ENCODE measurements at regions of chr17 and their contacts with region 1.

Region 1: DNA sequence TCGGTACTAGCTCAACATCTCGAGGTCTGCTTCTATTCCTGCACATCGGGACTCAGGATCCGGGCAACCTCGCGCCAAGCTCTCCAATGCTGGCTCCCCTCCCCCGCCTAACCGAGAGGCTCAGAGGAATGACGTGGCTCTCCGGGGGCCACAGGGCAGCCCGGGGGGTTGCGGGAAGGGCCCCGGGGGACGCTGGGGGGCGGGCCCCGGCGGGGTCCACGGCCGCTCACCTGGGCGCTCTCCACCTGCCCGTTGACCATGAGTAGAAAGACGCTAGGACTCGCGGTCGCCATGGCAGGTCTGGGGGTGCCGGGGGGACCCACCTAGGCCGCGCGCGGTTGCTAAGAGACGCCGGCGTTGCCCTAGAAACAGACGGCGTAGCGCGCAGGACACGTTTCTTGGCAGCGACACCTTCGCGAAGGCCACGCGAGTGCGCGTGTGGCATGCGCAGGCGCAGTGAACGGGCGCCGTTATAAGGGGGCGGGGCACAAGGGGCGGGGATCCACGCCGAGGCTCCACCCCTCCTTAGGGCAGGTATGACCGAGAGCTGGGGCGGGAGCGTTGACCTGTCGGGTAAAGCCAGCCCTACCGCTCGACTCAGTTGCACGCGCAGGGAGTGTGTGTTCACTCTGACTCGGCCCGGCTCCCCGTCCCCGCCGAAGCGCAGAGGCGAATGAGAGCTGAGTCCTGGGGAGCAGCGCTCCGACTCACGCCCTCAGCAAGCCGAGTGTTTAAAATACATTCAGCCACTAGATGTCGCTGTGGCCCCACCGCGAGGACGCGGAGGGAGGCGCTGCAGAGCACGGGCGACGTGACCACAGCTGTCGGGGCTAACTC is at the start of gene B9D1:
- DNase-seq: peak; percentile 69 to 96
- H3K4me3 ChIP-seq: peak within 1 kb of the TSS; percentile 46 to 91
- H3K27ac ChIP-seq: peak within 1 kb of the TSS; percentile 55 to 86
- H3K4me1 ChIP-seq: no peaks in the 10 kb centered on the region
- H3K27me3 ChIP-seq: no peaks in the 10 kb centered on the region
- CTCF ChIP-seq: peak; percentile 95 to 100 (median 99)
- total RNA-seq, gene B9D1: 49.1 TPM

Region 2: DNA sequence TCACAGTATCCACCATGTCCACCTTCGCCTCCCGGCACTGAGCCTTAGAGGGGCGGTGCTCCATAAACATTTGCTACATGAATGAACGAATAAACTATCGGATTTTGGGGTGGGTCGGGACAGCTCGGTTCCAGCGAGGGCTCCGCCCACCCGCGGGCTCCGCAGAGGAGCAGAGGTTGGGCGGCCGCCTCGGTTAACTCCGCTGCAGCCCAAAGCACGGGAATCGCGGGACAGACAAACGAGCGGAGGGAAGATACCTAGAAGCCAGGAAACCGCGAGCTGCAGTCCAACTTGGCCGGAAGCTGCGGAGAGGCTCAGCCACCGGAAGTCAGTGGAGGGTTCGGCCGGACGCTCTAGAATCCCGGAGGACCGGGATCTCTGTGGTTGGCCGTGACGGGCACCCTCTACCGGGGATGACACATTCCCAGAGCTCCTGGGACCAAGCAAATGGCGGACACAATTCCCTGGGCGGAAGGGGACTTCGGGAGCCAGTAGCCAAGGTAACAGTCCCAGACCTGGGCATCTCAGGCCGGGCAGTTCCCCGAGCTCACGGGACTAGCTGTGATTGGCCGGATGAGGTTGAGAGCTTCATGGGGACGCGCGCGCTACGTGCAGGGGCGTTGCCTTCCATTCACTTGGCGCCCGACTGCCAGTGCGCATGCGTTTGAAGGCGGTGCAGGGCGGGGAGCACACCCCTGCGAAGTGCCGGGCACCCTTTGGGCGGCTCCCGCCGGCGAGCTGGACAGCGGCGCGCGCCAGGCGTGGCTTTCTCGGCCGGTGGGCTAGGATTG is 15.3 kb after region 1 on chr17:
- intact Hi-C with region 1: loop called (anchors 1 kb)
- DNase-seq: peak; percentile 95 to 99
- H3K4me3 ChIP-seq: peak overlapping the region; percentile 81 to 98
- H3K27ac ChIP-seq: peak overlapping the region; percentile 93 to 98
- H3K4me1 ChIP-seq: peaks cover 3 to 15% of the 10 kb centered on the region in 2 donors
- H3K27me3 ChIP-seq: no peaks in the 10 kb centered on the region
- CTCF ChIP-seq: peak in 1 of 3 experiments; percentile 10

Region 3: DNA sequence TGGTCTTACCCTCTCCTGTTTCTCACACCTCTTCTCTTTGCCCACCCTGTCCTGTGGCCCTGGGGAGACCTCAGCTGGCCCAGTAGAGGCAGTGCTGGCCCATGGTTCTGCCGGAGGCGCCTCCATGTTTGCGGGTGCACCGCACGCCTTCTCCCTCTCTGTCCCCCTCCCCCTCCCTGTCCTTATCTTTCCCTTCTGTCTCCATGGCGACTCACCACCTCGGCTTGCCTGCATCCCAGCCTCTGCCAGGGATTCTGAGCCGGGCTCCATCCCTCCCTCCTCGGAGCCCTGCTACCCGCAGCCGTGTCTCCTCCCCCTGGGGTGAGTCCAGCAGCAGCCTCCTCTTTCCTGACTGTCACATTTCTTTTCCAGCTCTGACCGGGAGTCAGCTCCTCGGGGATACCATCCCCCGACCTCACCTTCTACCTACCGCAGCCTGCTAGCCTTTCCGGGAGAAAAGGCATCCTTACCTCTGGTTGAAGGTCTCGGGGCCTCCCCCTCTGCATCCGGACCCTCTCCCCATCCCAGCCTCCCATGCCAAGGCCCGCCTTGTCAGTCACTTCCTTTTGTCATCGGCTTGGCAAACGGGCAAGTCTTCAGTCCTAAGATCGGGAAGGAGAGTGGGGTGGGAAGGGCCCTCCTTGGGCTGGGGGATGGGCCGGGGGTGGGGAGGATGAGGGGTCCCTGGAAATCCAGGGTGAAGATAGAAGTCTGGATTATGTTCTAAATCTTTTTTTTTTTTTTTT is 48.6 kb after region 1 on chr17 and contains the start of gene RNF112:
- intact Hi-C with region 1: loop called (anchors 5 kb)
- DNase-seq: no peak
- H3K4me3 ChIP-seq: peak within 1 kb of the TSS; percentile 25 to 50
- H3K27ac ChIP-seq: no peak within 1 kb of the TSS
- H3K4me1 ChIP-seq: peaks cover 0 to 3% of the 10 kb centered on the region in 2 donors
- H3K27me3 ChIP-seq: no peaks in the 10 kb centered on the region
- CTCF ChIP-seq: peak in 2 of 3 experiments; percentile 20 to 39
- total RNA-seq, gene RNF112: 0.53 TPM

Region 4: DNA sequence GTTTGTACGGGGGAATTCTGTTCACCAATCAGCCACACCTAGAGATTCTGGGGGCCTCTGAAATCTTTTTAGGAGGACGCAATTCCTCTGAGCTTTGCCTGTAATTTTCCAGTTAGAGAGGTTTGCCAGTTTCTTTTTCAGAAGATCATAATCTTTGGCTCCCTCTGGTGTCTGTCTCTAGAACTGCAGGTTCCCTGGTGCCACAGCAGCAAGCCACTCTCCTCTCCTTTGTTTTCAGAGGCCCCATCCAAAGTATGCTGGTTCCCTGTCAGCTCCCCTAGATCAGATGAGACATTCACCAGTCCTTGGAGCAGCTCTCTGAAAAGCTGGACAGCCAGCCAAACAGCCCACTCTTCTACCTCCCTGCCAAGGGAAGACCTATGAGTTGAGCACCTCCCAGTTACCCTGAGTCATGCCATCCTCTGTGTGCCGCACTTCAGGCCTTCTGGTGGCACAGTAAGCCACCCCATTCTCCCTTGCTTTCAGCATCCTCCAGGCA is 84.6 kb after region 1 on chr17:
- intact Hi-C with region 1: loop called (anchors 1 kb)
- DNase-seq: peak in 1 of 2 donors; percentile 88
- H3K4me3 ChIP-seq: no peak overlapping the region
- H3K27ac ChIP-seq: peak overlapping the region; percentile 85 to 89
- H3K4me1 ChIP-seq: peaks cover 14 to 24% of the 10 kb centered on the region in 2 donors
- H3K27me3 ChIP-seq: no peaks in the 10 kb centered on the region
- CTCF ChIP-seq: peak; percentile 93 to 98 (median 97)

Region 5: DNA sequence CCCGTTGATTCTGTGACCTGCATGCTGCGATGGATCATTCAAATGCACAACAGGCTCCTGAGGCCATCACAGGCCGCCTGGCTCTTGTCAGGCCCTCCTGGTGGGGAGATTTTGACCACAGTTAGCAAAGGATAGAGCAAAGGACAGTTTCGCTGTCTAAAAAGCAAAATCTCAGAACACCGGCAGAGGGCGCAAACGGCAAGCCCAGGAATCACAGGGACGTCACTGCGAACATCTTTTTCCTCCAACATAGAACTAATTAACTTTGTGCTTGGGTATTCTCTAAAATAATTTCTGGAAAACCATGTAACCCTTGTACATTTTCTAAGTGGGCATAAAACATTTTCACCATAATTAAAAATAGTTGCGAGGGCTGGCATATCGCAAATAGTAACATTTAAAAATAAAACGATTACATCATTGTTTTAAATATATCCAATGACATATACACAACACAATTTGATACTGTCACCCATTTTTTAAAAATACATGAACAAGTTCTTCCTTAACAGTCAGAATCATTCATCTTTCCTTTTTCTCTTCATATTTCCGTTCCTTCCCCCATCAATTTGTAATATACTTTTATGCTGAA is 151.5 kb after region 1 on chr17:
- intact Hi-C with region 1: loop called (anchors 1 kb)
- DNase-seq: peak in 1 of 2 donors; percentile 86
- H3K4me3 ChIP-seq: no peak overlapping the region
- H3K27ac ChIP-seq: peak overlapping the region; percentile 84 to 88
- H3K4me1 ChIP-seq: peaks cover 3 to 15% of the 10 kb centered on the region in 2 donors
- H3K27me3 ChIP-seq: no peaks in the 10 kb centered on the region
- CTCF ChIP-seq: peak; percentile 92 to 93 (median 92)

Region 6: GRCh38 chr17:19614900-19615299 is 252.4 kb after region 1 on chr17:
- intact Hi-C with region 1: no loop called
- DNase-seq: no peak
- H3K4me3 ChIP-seq: no peak overlapping the region
- H3K27ac ChIP-seq: no peak overlapping the region
- H3K4me1 ChIP-seq: no peaks in the 10 kb centered on the region
- H3K27me3 ChIP-seq: no peaks in the 10 kb centered on the region
- CTCF ChIP-seq: no peak

Region 7: DNA sequence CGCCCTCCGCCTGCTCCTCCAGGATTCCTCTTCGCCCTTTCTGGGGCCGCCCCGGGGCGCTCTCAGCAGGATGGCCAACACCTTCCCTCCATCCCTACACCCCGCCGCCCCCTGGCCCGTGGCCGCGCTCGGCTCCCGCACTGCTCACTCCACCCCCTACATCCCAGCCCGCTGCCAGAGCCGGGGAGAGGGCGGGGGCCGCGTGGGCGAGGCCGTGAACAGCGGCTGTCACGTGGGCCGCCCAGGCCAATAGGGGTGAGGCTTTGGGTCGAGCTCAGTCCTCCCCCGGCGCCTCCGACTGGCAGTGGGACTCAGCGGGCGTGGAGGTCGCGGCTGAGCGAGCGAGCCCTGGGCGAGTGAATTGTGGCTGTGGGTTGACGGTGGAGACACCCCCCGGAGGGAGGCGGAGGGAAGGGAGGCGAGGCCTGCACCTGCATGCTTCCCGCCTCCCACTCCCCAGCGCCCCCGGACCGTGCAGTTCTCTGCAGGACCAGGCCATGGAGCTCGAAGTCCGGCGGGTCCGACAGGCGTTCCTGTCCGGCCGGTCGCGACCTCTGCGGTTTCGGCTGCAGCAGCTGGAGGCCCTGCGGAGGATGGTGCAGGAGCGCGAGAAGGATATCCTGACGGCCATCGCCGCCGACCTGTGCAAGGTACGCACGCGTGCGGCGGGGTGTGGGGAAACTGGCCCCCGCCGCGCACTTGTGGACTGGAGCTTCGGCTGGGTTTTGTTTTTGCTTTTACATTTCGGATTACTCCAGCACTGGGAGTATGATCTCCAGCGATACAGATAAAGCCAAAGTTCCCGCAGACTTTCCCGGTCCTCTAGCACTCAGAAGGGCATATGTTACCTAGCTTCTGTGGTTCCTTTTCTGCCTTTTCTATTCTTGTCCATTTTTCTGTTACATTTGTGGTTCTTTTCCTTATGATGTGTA is 286.2 kb after region 1 on chr17 and contains the start of gene ALDH3A2:
- intact Hi-C with region 1: loop called (anchors 5 kb)
- DNase-seq: peak; percentile 94 to 99
- H3K4me3 ChIP-seq: peak within 1 kb of the TSS; percentile 75 to 85
- H3K27ac ChIP-seq: peak within 1 kb of the TSS; percentile 97 to 99
- H3K4me1 ChIP-seq: peaks cover 11 to 41% of the 10 kb centered on the region in 2 donors
- H3K27me3 ChIP-seq: no peaks in the 10 kb centered on the region
- CTCF ChIP-seq: peak in 2 of 3 experiments; percentile 27 to 28
- total RNA-seq, gene ALDH3A2: 189 TPM

Region 8: DNA sequence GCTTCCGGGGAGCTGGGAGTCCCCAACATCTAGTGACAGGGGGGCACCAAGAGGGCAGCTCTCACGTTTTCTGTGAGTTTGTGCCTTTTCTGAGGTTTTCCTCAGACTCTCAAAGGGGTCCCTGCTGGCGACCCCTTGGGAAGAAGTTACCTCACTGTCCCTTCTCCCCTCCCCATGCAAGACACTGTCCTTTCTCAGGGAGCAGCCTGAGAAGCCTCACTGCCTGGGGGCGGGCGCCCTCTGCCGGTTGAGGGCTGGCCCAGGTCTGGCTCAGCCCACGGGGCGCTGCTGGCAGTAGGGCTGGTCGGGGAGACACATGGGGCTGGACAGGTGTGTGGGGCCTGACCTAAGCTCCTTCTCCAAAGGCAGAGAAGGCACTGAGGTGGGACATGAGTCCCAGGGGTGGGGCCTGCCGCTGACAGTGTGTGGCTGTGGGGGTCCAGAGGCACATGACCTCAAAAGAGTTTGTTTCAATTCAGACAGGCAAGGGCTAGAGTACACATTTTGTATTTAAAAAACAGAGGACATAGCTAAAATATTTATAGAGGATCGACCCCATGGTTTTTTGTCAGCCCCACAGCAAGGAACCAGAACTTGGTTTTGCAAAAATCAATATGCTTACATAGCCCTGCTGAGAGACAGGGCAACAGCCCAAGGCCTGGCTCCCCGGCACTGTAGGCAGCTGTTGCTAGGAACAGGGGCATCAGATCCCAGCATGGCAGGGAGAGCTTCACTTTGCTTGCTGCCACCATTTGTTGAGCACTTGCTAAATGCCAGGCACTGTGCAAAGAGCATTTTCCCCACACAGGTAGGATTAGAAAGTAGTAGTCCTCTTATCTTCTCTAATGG is 404.2 kb after region 1 on chr17:
- intact Hi-C with region 1: loop called (anchors 2 kb)
- DNase-seq: peak in 1 of 2 donors; percentile 86
- H3K4me3 ChIP-seq: no peak overlapping the region
- H3K27ac ChIP-seq: no peak overlapping the region
- H3K4me1 ChIP-seq: peaks cover 0 to 5% of the 10 kb centered on the region in 2 donors
- H3K27me3 ChIP-seq: no peaks in the 10 kb centered on the region
- CTCF ChIP-seq: peak; percentile 94 to 99 (median 97)

Measured in ascending aorta (tissue), 2 donors.